Heart right ventricle (tissue), 16 donors: ENCODE measurements at regions of chr2 and their contacts with region 1.

Region 1: DNA sequence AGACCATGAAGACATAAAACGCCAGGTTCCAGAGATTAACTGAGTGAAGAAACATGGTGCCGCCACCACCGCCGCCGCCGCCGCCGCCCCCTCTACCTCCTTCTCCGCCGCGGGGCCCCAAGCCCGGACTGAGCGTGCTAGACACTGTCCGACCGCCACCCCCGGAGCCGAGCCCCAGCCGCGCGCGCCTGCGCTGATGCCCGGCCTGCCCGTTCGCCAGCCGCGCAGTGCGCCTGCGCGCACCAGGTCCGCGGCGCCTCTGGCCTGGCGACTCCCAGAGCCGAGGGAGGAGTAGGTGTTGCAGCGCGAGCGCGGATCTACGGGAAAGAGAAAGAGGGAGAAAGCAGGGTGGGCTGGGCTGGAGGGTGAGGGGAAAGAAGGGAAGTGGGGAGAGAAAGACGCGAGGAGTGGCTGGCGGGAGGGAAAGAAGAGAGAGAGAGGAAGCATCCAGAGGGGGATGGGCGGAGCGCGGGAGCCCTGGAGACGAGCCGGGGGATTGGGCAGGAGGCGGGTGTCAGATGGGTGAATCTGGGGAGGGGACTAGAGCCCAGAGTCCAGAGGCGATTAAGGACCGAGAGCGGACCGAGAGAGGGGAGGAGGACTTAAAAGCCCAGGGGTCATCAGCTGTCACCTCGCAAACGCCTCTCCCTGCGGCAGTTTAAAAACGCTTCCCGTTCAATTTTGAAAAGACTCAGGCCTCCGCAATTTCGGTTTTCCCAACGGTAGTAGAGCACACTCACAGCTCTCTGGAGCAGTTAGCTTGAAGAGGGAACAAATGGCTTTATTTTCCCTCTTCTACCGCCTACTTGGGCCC is at the start of gene PGAP1:
- DNase-seq: peak; percentile 89 to 92
- ATAC-seq: peak; percentile 97 to 100 (median 98)
- H3K4me3 ChIP-seq: peak within 1 kb of the TSS; percentile 69 to 93 (median 84)
- H3K27ac ChIP-seq: peak within 1 kb of the TSS; percentile 25 to 93 (median 88)
- H3K4me1 ChIP-seq: peaks cover 0 to 34% (median 13%) of the 10 kb centered on the region in 9 donors
- H3K27me3 ChIP-seq: no peaks in the 10 kb centered on the region
- CTCF ChIP-seq: no peak
- total RNA-seq, gene PGAP1: 4.8 to 9.8 (median 5.8) TPM

Region 2: DNA sequence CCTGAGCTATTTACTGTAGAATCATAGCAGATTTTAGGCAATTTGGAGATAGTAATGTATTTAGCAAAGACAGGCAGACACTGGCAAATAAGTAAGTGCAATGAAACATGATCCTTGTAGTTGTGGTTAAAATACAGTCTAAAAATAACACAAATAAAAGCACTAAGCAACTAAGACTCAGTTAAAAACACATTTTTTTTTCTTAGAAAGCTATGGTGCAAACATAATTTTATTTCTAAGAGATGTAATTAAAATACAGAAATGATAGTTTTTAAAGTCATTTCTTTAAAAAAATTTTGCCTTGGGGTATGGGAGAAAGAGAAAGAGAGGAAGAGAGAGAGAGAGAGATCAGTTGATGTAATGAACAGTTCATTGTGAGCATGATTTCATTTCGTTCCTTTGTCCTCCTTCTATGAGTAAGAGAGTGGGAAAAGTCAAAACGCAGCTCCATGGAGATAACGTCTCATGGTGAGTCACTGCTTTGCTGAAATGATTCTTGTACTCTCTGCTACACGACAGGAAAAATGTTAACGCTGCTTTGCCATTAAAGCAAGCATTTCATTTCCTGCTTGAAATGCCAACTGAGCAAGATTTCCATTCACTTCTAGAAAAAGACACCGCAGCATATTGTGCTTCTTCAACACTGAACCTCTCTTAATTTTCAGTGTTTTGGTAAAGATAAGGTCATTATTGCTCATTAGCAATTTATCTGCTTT is 61.0 kb after region 1 on chr2:
- intact Hi-C with region 1: loop called in 4 of 10 experiments (anchors 1 to 10 kb)
- DNase-seq: peak in 1 of 2 donors; percentile 54
- ATAC-seq: peak; percentile 89 to 99 (median 92)
- H3K4me3 ChIP-seq: peak overlapping the region in 8 of 10 donors; percentile 0 to 28 (median 20)
- H3K27ac ChIP-seq: peak overlapping the region; percentile 16 to 85 (median 58)
- H3K4me1 ChIP-seq: peaks cover 0 to 63% (median 17%) of the 10 kb centered on the region in 9 donors
- H3K27me3 ChIP-seq: no peaks in the 10 kb centered on the region
- CTCF ChIP-seq: no peak

Region 3: DNA sequence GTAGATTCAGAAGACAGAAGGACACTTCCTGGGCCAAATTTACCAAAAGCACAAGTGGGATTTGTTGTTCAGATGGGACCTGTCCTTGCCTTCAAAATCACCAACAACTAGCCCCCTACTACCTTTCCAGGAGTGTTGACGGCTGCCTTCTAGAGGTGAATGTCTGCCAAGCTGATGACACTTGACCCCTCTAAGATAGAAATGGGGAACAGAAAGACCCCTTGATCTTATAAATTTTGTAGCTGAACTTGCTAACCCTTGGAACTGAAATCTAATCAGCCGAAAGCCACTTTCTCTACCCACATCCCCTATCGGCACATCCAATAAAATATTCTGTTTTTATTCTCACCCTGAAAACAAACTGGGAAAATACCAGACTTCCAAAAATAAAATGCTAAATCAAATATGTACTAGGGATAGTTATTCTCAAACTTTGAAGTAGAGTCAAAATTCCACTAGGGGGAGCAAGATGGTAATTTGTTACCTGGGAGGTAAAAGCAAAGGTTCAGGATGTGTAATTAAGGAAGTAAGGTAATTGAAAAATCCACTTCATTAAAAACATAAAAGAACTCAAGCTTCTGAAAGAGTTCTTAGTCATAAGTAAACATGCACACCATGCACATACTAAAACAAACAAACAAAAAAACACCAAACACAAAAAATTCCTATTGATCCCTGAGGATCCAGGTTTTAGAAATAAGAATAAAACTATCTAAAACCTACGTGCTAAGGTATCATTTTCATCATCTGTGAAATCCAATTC is 264.6 kb after region 1 on chr2:
- intact Hi-C with region 1: loop called in 1 of 10 experiments (anchors 10 kb)
- DNase-seq: no peak
- ATAC-seq: peak in 1 of 8 donors; percentile 50
- H3K4me3 ChIP-seq: no peak overlapping the region
- H3K27ac ChIP-seq: no peak overlapping the region
- H3K4me1 ChIP-seq: peaks cover 0 to 35% (median 14%) of the 10 kb centered on the region in 9 donors
- H3K27me3 ChIP-seq: no peaks in the 10 kb centered on the region
- CTCF ChIP-seq: peak; percentile 45 to 79 (median 74)